ENCODE measurements at regions of chr7 and their contacts with region 1.

Region 1: DNA sequence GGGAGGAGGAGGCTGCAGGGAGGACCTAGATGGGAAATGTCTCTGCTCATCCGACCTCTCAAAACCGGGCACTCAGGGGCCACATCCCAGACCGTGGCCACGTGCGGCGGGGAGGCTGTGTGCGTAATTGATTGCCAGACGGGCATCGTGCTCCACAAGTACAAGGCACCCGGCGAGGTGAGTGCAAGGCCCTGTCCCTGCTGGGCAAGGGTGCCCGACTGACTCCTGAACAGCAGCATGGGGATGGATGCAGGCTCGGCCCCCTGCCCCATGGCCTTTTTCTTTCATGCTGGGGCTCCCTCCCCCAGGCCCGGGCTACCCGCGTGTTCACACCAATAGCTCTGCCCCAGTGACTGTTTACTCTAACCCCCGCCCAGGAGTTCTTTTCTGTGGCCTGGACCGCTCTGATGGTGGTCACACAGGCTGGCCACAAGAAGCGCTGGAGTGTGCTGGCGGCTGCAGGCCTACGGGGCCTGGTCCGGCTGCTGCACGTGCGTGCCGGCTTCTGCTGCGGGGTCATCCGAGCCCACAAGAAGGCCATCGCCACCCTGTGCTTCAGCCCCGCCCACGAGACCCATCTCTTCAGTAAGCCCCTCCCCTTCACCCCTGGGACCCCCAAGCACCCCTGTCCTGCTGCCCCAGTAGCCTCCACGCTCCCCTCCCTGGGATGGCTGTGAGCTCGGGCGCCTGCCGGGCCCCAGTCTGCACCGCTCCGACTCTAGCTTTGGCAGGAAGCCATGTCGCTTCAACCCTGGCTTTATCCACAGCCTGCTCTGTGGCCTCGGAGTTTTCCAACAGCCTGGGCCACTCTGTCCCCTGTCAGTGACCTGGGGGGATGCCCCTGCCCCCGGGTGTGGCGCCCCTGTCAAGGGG is 3.9 kb downstream of the LRWD1 start:
- DNase-seq: no peak
- CTCF ChIP-seq: no peak

Region 2: DNA sequence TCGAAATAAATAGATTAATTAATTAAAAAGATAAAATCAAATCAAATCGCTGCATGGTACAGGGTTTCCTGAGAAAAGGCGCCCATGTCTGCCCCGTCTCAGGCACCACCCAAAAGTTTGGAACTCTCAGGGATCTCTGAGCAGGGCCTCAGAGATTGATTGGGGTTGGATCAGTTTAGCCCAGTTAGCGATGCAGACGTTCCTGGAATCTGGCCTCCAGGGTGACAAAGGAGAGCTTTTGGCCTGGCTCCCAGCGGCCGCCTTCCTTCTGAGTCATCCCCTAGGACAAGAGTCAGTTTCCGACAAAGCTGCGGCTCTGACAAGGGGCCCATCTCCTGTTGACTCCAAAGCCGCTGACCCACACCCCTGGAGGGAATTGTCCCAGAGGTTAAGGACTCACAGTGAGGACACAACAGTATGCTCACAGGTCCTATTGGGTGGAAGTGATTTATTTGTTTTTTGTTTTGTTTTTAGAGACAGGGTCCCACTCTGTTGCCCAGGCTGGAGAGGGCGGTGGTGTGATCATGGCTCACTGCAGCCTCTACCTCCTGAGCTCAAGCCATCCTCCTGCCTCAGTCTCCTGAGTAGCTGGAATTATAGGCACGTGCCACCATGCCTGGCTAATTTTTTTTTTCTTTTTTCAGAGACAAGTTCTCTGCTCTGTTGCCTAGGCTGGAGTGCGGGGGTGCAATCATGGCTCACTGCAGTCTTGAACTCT is 28.5 kb before region 1 on chr7:
- CTCF ChIA-PET with region 1: interaction called, 13 read pairs
- POLR2A ChIA-PET with region 1: interaction called, 3 read pairs
- DNase-seq: no peak
- CTCF ChIP-seq: no peak

Region 3: DNA sequence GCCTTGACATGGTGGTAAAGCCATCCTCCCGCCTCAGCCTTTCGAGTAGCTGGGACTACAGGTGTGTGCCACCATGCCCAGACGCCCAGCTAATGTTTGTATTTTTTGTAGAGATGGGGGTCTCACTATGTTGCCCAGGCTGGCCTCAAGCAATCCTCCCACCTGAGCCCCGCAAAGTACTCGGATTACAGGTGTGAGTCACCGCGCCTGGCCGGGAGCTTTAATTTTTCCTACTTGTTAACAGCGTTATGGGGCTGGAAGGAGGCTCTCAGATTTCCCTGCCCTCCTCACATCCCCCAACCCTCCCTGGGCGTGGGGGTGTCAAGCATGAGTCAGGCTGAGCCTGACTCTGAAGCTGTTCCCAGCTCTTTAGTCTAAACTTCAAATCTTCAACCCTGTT is 12.4 kb before region 1 on chr7:
- CTCF ChIA-PET with region 1: interaction called, 12 read pairs
- POLR2A ChIA-PET with region 1: no interaction called
- DNase-seq: no peak
- CTCF ChIP-seq: no peak